ENCODE measurements at regions of chr10 and their contacts with region 1.

Region 1: DNA sequence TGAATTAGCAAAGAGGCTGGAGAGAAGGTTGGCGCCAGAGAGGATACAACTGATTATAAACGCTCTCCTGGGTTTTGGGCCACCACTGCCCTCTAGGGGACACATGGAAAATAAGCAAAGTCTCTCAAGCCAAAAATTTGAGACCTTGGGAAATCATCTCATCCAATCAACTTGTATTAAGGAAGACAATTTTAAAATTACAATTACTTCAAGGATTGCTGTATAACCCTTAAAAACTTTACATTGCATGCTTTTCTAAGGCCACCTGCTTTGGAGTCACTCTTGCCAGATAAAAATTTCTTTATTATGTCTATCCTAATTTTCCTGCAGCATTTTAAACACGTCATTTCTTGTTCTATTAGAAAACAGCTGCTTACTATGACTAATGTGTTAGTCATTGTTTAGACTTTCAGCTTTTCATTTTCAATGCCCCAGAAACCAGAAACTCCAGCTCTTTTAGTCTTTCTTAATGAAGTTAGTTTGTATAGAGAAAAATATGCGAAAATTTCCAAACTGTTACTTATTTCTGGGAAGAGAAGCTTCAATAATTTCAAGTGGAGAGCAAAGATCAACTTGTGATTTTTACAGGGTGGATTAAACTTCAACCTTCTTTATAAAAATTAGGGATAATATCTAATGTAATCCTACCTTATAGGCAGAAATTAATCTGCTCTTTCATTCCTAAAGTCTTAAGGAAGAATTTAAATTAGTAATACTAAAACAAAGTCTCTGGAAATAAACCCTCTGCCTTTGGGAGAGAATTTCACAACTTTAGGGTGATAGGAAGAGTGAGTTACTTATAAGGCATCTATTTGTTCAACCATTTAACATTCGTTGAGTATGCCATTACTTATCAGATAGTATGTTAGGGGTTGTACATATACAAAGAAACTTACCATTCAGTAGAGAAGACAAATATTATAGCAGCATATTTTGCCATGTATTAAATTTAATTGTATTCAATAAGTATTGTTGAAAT is 20.6 kb upstream of the RHOBTB1 start:
- DNase-seq: peak; percentile 75

Region 2: DNA sequence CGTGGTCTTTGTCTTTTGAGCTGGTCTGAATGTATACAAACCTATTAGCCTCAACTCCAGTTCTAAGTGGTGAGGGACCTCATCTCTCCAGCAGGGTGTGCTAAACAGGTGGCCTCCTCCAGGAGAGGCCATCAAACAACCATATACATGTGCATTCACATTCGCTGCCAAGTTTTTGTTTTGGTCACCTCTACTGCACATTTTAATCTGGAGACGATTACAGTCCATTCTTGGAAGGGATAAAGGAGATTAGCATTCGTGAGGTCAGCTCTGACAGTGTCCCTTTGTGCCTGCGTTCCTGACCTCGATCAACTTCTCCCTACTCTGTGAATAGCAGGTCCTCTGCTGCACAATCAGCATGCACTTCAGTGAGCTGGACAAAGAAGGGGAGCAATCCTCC is 81.4 kb before region 1 on chr10:
- intact Hi-C with region 1: loop called (anchors 5 kb)
- DNase-seq: no peak

Region 3: GRCh38 chr10:60944159-60944909 is 20.2 kb before region 1 on chr10 and contains the start of gene RHOBTB1:
- intact Hi-C with region 1: no loop called
- DNase-seq: peak; percentile 90
- total RNA-seq, gene RHOBTB1: 16.3 TPM

Region 4: DNA sequence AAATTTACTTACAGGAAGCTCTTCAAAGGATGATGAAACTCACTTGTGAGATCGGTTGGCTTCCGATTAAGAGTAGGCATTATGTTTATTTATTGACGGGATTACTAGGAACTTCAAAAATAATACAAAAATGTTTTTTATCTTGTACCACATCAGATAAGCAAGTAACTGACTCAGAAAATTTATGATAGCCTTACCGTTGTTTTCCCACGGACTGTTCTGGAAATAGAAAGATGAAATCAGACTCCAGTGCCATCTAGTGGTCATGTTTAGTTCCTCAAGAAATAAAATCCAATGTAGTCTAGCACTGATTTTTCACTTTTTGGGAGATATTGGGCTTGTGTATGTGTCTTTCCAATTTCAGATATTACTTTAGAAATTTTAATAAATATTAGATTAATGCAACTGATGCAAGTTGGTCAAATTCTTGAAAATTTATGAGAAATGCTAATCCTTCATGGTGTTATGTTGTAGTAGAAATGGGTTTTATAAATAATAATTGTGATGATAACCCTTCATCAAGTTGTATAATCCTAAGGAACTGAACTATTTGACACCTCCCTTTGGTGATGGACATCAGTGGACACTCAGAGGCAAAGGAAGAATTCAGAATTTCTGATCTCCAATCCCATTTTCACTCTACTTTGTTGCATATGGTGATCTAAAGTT is 319.8 kb after region 1 on chr10:
- intact Hi-C with region 1: loop called (anchors 5 kb)
- DNase-seq: no peak

Measured in cardiac septum (tissue), 1 donor.